Common myeloid progenitor, CD34-positive (primary cell): ENCODE measurements at regions of chr11 and their contacts with region 1.

Region 1: DNA sequence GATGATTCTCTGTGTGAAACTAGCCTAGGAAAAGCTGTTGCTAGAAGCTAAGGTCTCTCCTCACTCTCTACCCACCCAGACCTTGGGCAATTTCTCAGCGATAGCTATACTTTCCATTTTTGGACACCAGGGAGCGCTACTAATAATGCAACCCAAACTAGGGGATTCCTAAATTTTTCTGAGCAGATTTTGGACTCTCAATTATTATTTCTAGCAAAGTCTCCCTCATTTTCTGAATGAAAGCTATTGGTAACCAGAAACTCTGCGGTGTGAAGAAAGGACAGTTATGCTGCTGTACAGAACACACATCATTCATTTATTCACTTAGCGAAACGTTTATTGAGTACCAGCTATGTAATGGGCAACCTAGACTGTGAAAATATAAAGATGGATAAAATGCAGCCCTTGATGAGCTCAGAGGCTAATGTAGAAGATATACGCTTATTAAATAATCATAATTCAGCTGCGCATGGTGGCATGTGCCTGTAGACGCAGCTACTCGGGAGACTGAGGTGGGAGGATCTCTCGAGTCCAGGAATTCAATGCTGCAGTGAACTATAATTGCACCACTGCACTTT is 6.1 kb upstream of the STIM1 start:
- DNase-seq: peak; percentile 67 to 82 (median 74)
- H3K4me3 ChIP-seq: no peak overlapping the region
- H3K27ac ChIP-seq: no peak overlapping the region
- H3K4me1 ChIP-seq: peaks cover 7 to 21% (median 15%) of the 10 kb centered on the region in 4 experiments
- H3K27me3 ChIP-seq: no peaks in the 10 kb centered on the region

Region 2: DNA sequence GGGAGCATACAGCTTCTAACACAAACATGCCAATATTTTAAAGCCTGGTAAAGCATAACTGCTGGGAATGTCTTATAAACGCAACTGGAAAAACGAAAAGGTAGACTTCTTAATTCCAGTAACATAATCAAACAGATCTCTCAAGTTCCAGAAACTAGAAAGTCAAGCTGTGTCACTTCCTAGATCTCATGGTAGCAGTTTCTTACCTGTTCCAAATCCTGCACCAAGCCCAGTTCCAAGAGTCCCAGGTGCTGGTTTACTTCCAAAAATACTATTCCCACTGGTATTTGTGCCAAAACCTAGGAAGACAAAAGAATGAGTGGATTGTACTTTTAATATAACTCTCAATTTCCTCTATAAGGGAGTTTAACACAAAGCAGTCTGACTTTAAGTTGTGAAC is 96.3 kb before region 1 on chr11:
- CTCF ChIA-PET with region 1: no interaction called
- POLR2A ChIA-PET with region 1: no interaction called
- DNase-seq: no peak
- H3K4me3 ChIP-seq: no peak overlapping the region
- H3K27ac ChIP-seq: no peak overlapping the region
- H3K4me1 ChIP-seq: no peaks in the 10 kb centered on the region
- H3K27me3 ChIP-seq: no peaks in the 10 kb centered on the region

Region 3: GRCh38 chr11:3824714-3825472 is 24.5 kb before region 1 on chr11:
- CTCF ChIA-PET with region 1: interaction called, 314 read pairs
- POLR2A ChIA-PET with region 1: no interaction called
- DNase-seq: peak; percentile 85 to 91 (median 89)
- H3K4me3 ChIP-seq: no peak overlapping the region
- H3K27ac ChIP-seq: peak overlapping the region in 1 of 2 experiments; percentile 44
- H3K4me1 ChIP-seq: peaks cover under 1 to 13% (median 6%) of the 10 kb centered on the region in 4 experiments
- H3K27me3 ChIP-seq: no peaks in the 10 kb centered on the region

Region 4: DNA sequence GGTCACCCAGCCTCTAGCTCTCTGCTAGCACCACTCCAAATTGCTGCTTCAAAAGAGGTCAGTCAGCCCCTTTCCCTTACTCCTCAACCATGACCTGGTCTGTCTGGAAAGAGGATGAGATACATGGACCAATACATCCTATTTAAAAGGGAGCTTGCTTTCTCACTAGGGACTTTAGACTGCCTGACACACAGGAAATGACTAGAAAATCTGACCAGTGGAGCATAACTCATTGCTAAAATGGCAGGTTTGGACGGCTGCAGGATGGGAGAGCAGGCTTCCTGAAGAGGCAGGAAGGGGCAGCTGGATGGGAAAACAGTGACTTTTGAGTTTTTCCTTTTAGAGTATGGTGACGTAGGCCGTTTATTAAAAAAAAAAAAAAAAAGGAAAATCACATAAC is 31.3 kb after region 1 on chr11:
- CTCF ChIA-PET with region 1: interaction called, 35 read pairs
- POLR2A ChIA-PET with region 1: no interaction called
- DNase-seq: no peak
- H3K4me3 ChIP-seq: peak overlapping the region in 1 of 7 experiments; percentile 48
- H3K27ac ChIP-seq: peak overlapping the region in 1 of 2 experiments; percentile 63
- H3K4me1 ChIP-seq: peaks cover 25 to 68% (median 40%) of the 10 kb centered on the region in 4 experiments
- H3K27me3 ChIP-seq: no peaks in the 10 kb centered on the region

Region 5: DNA sequence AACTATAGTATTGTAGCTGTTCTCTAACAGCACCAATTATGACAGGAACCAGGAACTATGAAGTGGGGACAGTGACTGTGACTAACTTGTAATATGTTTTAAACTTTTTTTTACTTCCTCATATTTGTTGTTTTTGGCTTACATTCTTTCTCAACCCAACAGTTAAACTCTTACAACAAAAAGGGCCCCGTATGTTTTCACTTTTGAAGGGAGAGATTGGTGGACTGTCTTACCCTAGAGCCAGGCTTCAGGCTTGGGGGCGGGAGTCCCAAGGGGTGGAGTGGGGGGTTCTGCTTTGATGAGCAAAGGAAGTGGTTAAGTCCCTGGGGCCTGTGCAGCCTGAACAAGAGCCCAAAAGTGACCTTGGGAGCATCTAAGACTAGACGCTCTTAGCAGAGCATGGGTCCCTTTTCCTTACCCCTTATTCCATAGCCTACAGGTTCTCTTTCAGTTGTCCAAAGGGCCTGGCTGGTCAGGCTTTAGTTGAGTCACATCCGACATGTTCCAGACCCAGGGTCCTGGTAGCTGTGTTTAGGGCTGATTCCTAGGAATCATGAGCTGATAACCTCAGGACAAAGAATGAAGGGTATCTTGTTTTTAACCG is 44.8 kb after region 1 on chr11:
- CTCF ChIA-PET with region 1: interaction called, 17 read pairs
- POLR2A ChIA-PET with region 1: no interaction called
- DNase-seq: peak; percentile 55 to 86 (median 82)
- H3K4me3 ChIP-seq: peak overlapping the region in 2 of 7 experiments; percentile 9 to 44
- H3K27ac ChIP-seq: peak overlapping the region; percentile 36 to 80
- H3K4me1 ChIP-seq: peaks cover 7 to 43% (median 20%) of the 10 kb centered on the region in 4 experiments
- H3K27me3 ChIP-seq: no peaks in the 10 kb centered on the region

Region 6: DNA sequence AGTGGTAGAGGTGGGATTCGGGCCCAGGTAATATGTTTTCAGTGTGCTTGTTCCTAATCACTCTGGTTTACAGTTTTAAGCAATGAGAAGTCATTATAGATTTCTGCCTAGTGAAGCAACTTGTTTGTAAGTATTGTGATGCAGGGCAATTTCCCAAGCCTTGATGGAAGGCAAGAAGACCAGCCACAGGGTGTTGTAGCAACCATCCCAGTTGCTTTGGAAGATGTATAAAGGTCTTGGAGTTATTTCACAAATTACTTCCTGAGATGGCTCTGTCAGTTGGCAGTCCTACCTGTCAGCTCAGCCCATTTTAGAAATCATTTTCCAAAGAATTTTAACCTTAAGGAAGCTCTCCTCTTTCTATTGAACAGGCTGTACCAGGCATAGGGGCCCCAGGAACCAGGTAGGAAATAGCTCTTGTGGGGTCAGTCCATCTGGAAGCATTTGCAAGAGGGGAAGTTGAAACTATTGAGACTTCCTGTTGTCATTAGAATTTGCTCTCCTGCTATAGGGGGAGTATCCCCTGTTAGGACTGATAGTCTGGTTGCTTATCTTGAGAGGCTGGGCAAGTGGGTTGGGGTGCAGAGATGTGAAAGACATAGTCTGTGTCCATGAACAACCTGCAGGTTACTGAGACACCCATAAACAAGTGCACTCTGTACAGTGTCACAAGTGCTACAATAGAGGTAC is 54.0 kb after region 1 on chr11:
- CTCF ChIA-PET with region 1: interaction called, 25 read pairs
- POLR2A ChIA-PET with region 1: interaction called, 3 read pairs
- DNase-seq: peak in 2 of 3 donors; percentile 38 to 60
- H3K4me3 ChIP-seq: peak overlapping the region in 1 of 7 experiments; percentile 43
- H3K27ac ChIP-seq: no peak overlapping the region
- H3K4me1 ChIP-seq: peaks cover 10 to 55% (median 26%) of the 10 kb centered on the region in 4 experiments
- H3K27me3 ChIP-seq: no peaks in the 10 kb centered on the region

Region 7: DNA sequence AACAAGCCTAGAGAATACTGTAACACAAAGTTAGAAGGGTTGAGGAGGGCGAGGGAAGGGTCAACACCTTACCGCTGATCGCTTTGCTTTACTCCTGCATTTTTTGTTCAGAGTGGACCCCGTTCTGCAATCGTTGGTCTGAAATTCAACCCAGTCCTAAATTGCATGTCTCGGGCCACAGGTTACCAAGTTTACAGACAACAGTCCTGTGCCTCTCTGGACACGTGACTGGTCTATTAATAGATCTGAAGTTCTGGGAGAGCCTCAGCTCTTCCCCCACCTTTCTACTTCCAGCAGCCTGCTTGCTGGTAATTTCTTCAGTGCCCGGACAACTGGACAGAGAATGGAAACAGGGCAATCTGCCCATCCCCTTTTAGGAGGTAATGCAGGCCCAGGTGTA is 80.3 kb after region 1 on chr11:
- CTCF ChIA-PET with region 1: interaction called, 22 read pairs
- POLR2A ChIA-PET with region 1: interaction called, 4 read pairs
- DNase-seq: no peak
- H3K4me3 ChIP-seq: no peak overlapping the region
- H3K27ac ChIP-seq: no peak overlapping the region
- H3K4me1 ChIP-seq: peaks cover 6 to 22% (median 10%) of the 10 kb centered on the region in 4 experiments
- H3K27me3 ChIP-seq: no peaks in the 10 kb centered on the region

Region 8: DNA sequence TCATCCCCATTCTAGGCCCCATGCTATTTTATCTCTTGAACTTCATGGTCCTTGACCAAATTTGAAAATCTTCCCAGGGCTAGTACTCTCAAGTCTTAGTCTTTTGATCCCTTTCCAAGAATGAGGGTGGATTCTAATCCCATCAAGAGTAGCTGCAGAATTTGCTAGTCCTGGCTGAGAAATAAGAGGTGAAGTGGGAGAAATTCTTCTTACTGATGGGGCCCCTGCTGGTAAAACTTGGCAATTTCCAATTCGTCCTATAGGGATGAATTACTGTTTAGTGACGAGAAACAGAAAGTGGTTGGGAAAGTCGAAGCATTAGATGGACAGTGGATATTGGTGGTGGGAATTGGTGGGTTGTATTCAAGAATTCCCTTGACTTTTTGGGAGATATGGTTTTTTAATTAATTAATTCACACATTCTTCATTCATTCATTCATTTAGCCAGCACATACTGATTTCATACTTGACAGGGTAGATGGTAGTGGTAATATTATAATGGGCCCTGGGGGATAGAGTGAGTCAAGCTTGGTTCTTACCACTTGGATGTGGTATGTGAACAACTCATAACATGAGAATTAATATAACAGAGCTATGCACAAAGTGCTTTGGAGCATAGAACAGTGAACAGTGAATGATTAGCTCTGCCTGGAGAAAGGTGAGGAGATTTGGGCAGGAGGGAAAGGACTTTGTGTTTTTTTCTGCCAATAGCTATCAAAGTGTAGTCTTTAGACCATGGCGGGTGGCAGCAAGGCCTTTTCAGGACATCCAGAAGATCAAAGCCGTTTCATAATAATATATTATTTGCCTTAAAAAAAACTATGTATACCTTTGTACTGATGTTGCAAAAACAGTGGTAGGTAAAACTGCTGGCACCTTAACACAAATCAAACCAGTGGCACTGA is 109.9 kb after region 1 on chr11:
- CTCF ChIA-PET with region 1: interaction called, 22 read pairs
- POLR2A ChIA-PET with region 1: no interaction called
- DNase-seq: peak in 1 of 3 donors; percentile 43
- H3K4me3 ChIP-seq: no peak overlapping the region
- H3K27ac ChIP-seq: no peak overlapping the region
- H3K4me1 ChIP-seq: peaks cover 0 to 18% (median 5%) of the 10 kb centered on the region in 4 experiments
- H3K27me3 ChIP-seq: no peaks in the 10 kb centered on the region

Region 9: DNA sequence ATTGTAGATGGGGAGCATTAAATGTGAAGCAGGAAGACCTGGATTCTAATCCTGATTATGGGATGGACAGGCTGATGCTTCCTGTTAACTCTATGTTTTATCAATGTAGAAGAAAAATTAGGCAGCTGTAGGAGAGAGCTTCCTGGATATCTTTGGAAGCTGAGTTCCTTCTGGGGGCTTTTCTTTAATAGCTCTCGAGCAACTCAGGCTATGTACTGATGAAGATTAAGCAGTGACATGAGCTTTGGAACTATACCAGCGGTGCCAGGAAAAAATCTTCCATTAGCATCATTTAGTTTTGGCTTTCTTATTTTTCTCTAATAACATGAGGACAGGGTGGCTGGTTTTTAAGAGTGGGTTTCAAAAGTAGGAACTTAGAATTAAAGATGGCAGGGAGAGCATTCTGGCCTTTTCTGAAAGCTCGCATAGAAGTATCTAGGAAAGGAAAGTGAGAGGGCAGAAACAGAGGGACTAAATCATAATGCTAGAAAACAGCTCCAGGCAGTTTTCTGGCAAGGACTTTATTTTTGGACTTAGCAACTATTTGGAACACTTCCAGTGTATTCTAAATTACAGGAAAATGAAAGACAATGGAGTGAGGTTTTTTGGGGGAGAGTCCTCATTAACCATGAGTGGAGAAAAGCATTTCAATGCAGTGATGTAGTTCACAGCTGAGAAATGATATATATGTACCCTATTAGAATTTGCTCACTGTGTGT is 176.0 kb after region 1 on chr11:
- CTCF ChIA-PET with region 1: no interaction called
- POLR2A ChIA-PET with region 1: no interaction called
- DNase-seq: no peak
- H3K4me3 ChIP-seq: no peak overlapping the region
- H3K27ac ChIP-seq: no peak overlapping the region
- H3K4me1 ChIP-seq: peaks cover 0 to 3% (median 0%) of the 10 kb centered on the region in 4 experiments
- H3K27me3 ChIP-seq: no peaks in the 10 kb centered on the region